H1 (cell line): ENCODE measurements at regions of chr9 and their contacts with region 1.

Region 1: GRCh38 chr9:136225748-136226679 is 19.6 kb downstream of the QSOX2 start:
- DNase-seq: peak; percentile 44 to 92
- H3K4me3 ChIP-seq: no peak overlapping the region
- H3K27ac ChIP-seq: no peak overlapping the region
- H3K4me1 ChIP-seq: no peaks in the 10 kb centered on the region; a peak in 1 of 7 replicates
- H3K27me3 ChIP-seq: no peaks in the 10 kb centered on the region
- CTCF ChIP-seq: peak in 2 of 3 experiments; percentile 98 to 99; a peak in 3 of 4 replicates
- EP300 ChIP-seq: no peak
- POLR2A ChIP-seq: no peak
- RAD21 ChIP-seq: peak; percentile 74 to 85

Region 2: GRCh38 chr9:136045971-136046920 is 179.8 kb before region 1 on chr9:
- CTCF ChIA-PET with region 1: no interaction called
- POLR2A ChIA-PET with region 1: no interaction called
- DNase-seq: no peak
- H3K4me3 ChIP-seq: no peak overlapping the region
- H3K27ac ChIP-seq: no peak overlapping the region
- H3K4me1 ChIP-seq: peaks cover 0 to 27% (median 8%) of the 10 kb centered on the region in 4 experiments; a peak in 5 of 7 replicates
- H3K27me3 ChIP-seq: peaks cover 0 to 2% (median 0%) of the 10 kb centered on the region in 4 experiments; a peak in 2 of 7 replicates
- CTCF ChIP-seq: no peak
- EP300 ChIP-seq: no peak
- POLR2A ChIP-seq: no peak
- RAD21 ChIP-seq: no peak

Region 3: GRCh38 chr9:136128436-136128835 is 97.6 kb before region 1 on chr9:
- CTCF ChIA-PET with region 1: no interaction called
- POLR2A ChIA-PET with region 1: no interaction called
- DNase-seq: no peak
- H3K4me3 ChIP-seq: no peak overlapping the region
- H3K27ac ChIP-seq: no peak overlapping the region
- H3K4me1 ChIP-seq: peaks cover 0 to 13% (median 6%) of the 10 kb centered on the region in 4 experiments; a peak in 5 of 7 replicates
- H3K27me3 ChIP-seq: peaks cover 0 to 17% (median 10%) of the 10 kb centered on the region in 4 experiments; a peak in 5 of 7 replicates
- CTCF ChIP-seq: no peak
- EP300 ChIP-seq: no peak
- POLR2A ChIP-seq: no peak
- RAD21 ChIP-seq: no peak

Region 4: GRCh38 chr9:136211441-136212344 is 14.3 kb before region 1 on chr9:
- CTCF ChIA-PET with region 1: interaction called, 52 read pairs
- POLR2A ChIA-PET with region 1: no interaction called
- DNase-seq: no peak
- H3K4me3 ChIP-seq: no peak overlapping the region
- H3K27ac ChIP-seq: no peak overlapping the region
- H3K4me1 ChIP-seq: peaks cover 0 to 2% (median 0%) of the 10 kb centered on the region in 4 experiments; a peak in 2 of 7 replicates
- H3K27me3 ChIP-seq: peaks cover 0 to 2% (median 0%) of the 10 kb centered on the region in 4 experiments; a peak in 1 of 7 replicates
- CTCF ChIP-seq: no peak
- EP300 ChIP-seq: no peak
- POLR2A ChIP-seq: no peak
- RAD21 ChIP-seq: no peak

Region 5: DNA sequence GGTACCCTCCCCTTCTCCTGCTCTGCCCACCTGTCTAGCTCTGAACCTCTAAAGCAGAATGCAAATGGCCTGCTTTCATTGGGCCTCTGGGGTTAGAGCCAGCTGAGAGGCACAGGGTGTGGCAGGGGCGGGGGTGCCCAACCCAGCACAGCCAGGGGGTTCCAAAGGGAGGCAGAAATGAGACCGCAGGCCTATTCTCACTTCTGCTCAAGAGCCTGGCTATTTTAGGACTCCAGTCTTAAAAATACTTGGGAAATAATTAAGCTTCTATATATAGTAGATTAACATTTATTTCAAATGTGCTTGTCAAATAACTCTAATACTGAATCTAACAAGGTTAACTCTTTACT is 13.9 kb after region 1 on chr9:
- CTCF ChIA-PET with region 1: interaction called, 10 read pairs
- POLR2A ChIA-PET with region 1: interaction called, 3 read pairs
- DNase-seq: no peak
- H3K4me3 ChIP-seq: no peak overlapping the region
- H3K27ac ChIP-seq: no peak overlapping the region
- H3K4me1 ChIP-seq: peaks cover 3 to 12% (median 8%) of the 10 kb centered on the region in 4 experiments; a peak in 6 of 7 replicates
- H3K27me3 ChIP-seq: no peaks in the 10 kb centered on the region
- CTCF ChIP-seq: no peak
- EP300 ChIP-seq: no peak
- POLR2A ChIP-seq: no peak
- RAD21 ChIP-seq: no peak

Region 6: GRCh38 chr9:136267261-136268111 is 41.5 kb after region 1 on chr9:
- CTCF ChIA-PET with region 1: interaction called, 10 read pairs
- POLR2A ChIA-PET with region 1: no interaction called
- DNase-seq: peak; percentile 58 to 90
- H3K4me3 ChIP-seq: peak overlapping the region; percentile 21 to 78 (median 49)
- H3K27ac ChIP-seq: peak overlapping the region; percentile 40; the same call in 1 of the 2 replicates
- H3K4me1 ChIP-seq: peaks cover 0 to 17% (median 6%) of the 10 kb centered on the region in 4 experiments; a peak in 5 of 7 replicates
- H3K27me3 ChIP-seq: no peaks in the 10 kb centered on the region
- CTCF ChIP-seq: peak in 2 of 3 experiments; percentile 7 to 17; a peak in 1 of 4 replicates
- EP300 ChIP-seq: no peak
- POLR2A ChIP-seq: peak in 1 of 2 experiments; percentile 74; a peak in 2 of 3 replicates
- RAD21 ChIP-seq: peak in 1 of 2 experiments; percentile 26; a peak in 2 of 4 replicates